ENCODE measurements at regions of chr4 and their contacts with region 1.

Region 1: GRCh38 chr4:109798866-109799265 is 2.9 kb downstream of the CFI start:
- DNase-seq: no peak
- H3K4me3 Mint-ChIP-seq: no peak overlapping the region
- H3K27ac Mint-ChIP-seq: no peak overlapping the region
- H3K4me1 Mint-ChIP-seq: no peaks in the 10 kb centered on the region
- H3K27me3 Mint-ChIP-seq: peaks cover 15% of the 10 kb centered on the region

Region 2: GRCh38 chr4:109729718-109730618 is 68.9 kb before region 1 on chr4 and contains the start of gene PLA2G12A:
- CTCF ChIA-PET with region 1: no interaction called
- POLR2A ChIA-PET with region 1: interaction called, 20 read pairs
- DNase-seq: peak; percentile 72
- H3K4me3 Mint-ChIP-seq: peak within 1 kb of the TSS; percentile 85
- H3K27ac Mint-ChIP-seq: peak within 1 kb of the TSS; percentile 84
- H3K4me1 Mint-ChIP-seq: peaks cover 22% of the 10 kb centered on the region
- H3K27me3 Mint-ChIP-seq: no peaks in the 10 kb centered on the region
- total RNA-seq, gene PLA2G12A: 18.7 TPM

Region 3: GRCh38 chr4:109912706-109913595 is 114.1 kb after region 1 on chr4 and contains the start of gene EGF:
- CTCF ChIA-PET with region 1: no interaction called
- POLR2A ChIA-PET with region 1: no interaction called
- DNase-seq: no peak
- H3K4me3 Mint-ChIP-seq: no peak within 1 kb of the TSS
- H3K27ac Mint-ChIP-seq: no peak within 1 kb of the TSS
- H3K4me1 Mint-ChIP-seq: no peaks in the 10 kb centered on the region
- H3K27me3 Mint-ChIP-seq: peaks cover 30% of the 10 kb centered on the region
- total RNA-seq, gene EGF: not detected